ENCODE measurements at regions of chr12 and their contacts with region 1.

Region 1: GRCh38 chr12:91172096-91172495 is 10.5 kb downstream of the DCN start:
- DNase-seq: no peak
- H3K4me3 ChIP-seq: no peak overlapping the region
- H3K27ac ChIP-seq: no peak overlapping the region
- H3K4me1 ChIP-seq: no peaks in the 10 kb centered on the region
- H3K27me3 ChIP-seq: no peaks in the 10 kb centered on the region
- CTCF ChIP-seq: no peak

Region 2: DNA sequence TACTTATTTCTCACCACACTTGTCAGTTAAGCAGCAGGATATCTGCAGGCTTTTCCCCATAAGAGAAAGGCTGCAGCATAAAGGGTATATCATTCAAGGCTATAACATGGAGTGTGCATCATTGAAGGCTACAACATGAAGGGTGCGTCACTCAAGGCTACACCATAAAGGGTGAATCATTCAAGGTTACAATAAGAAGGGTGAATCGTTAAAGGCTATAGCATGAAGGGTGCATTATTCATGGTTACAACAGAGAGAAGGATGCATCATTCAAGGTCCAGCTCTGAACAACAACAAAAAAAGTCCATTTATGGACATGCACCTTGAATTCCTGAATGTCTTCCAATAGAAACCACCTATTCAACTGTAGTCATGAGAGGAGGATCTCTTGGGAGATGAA is 28.0 kb before region 1 on chr12:
- intact Hi-C with region 1: loop called (anchors 2 kb)
- DNase-seq: no peak
- H3K4me3 ChIP-seq: no peak overlapping the region
- H3K27ac ChIP-seq: no peak overlapping the region
- H3K4me1 ChIP-seq: peaks cover 0 to 35% (median 8%) of the 10 kb centered on the region in 4 donors
- H3K27me3 ChIP-seq: no peaks in the 10 kb centered on the region
- CTCF ChIP-seq: no peak